ENCODE measurements at regions of chr5 and their contacts with region 1.

Region 1: GRCh38 chr5:34474573-34475021 is 181.5 kb upstream of the RAI14 start:
- DNase-seq: no peak
- H3K4me3 ChIP-seq: no peak overlapping the region
- H3K27ac ChIP-seq: no peak overlapping the region
- H3K4me1 ChIP-seq: no peaks in the 10 kb centered on the region
- H3K27me3 ChIP-seq: no peaks in the 10 kb centered on the region
- CTCF ChIP-seq: peak; percentile 51 to 79 (median 72)
- EP300 ChIP-seq: no peak
- POLR2A ChIP-seq: no peak

Region 2: GRCh38 chr5:33509036-33509435 is 965.6 kb before region 1 on chr5:
- intact Hi-C with region 1: no loop called
- DNase-seq: no peak
- H3K4me3 ChIP-seq: no peak overlapping the region
- H3K27ac ChIP-seq: no peak overlapping the region
- H3K4me1 ChIP-seq: no peaks in the 10 kb centered on the region
- H3K27me3 ChIP-seq: no peaks in the 10 kb centered on the region
- CTCF ChIP-seq: no peak
- EP300 ChIP-seq: no peak
- POLR2A ChIP-seq: no peak

Region 3: DNA sequence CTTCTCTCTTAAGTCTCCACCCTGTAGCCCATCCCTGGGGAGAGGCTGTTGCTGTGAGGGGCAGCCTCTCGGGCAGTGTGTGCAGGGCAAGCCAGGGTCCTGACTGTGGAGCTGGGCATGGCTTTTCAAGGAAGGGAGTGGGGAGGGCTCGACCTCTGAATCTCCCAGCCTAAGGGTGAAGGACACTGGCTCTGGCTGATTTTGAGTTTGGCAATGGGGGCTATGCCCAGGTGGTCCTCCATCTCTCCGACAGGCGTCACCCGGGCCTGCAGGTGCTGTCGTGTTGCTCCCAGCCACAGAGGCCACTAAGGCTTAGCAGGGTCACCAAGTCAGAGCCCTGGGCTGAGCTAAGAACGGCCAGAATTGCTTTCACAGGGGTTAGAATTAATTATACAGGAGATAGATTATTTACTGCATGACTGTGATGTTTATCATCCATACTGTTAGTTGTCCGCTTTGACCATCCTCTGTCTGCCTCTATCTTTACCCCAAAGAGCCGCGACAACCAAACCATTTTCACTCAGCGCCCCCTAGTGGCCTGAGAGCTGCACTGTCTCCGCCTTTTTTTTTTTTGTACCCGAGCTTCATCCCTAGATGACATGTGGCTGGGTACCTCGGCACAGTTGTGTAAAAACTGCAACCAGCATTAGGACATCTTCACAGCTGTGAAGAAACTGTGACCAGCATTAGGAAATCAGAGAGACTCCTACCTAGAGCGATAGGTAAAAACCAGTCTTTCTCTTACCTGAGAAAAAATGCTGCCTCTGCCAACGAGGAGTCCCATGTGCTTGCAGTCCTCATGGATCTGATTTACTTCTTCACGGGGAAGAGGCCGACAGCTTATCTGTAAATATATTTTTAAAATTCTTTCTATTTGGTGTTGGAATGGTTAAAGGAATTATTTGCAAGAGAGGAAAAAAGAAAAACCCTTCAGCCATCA is 528.7 kb after region 1 on chr5:
- intact Hi-C with region 1: loop called in 1 of 4 experiments (anchors 10 kb)
- DNase-seq: peak; percentile 28 to 64 (median 61)
- H3K4me3 ChIP-seq: no peak overlapping the region
- H3K27ac ChIP-seq: no peak overlapping the region
- H3K4me1 ChIP-seq: no peaks in the 10 kb centered on the region
- H3K27me3 ChIP-seq: no peaks in the 10 kb centered on the region
- CTCF ChIP-seq: peak in 2 of 3 donors; percentile 27 to 34
- EP300 ChIP-seq: no peak
- POLR2A ChIP-seq: no peak

Measured in ovary (tissue), 10 donors.